Ovary (tissue), 10 donors: ENCODE measurements at regions of chr16 and their contacts with region 1.

Region 1: GRCh38 chr16:79482011-79482410 is 118.5 kb downstream of the MAF start:
- DNase-seq: no peak
- H3K4me3 ChIP-seq: no peak overlapping the region
- H3K27ac ChIP-seq: no peak overlapping the region
- H3K4me1 ChIP-seq: no peaks in the 10 kb centered on the region
- H3K27me3 ChIP-seq: no peaks in the 10 kb centered on the region
- CTCF ChIP-seq: no peak
- EP300 ChIP-seq: no peak
- POLR2A ChIP-seq: no peak

Region 2: DNA sequence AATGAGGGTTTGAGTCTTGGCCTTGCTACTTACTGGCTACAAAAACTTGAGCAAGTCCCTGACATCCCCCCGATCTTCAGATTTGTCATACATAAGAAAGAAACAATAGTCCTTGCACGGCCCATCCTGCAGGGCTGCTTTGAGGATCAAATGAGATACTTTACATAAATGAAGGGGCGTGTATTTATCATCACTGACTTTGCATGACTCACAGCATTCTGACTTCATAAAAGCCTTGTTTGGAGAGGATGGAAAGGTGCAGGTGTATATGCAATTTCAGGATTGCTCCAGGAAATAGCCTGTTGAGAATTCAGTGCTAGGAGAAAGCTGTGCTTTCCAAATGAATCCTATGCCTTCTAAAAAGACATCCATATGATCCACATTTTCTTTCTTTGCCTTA is 583.6 kb after region 1 on chr16:
- intact Hi-C with region 1: loop called in 1 of 4 experiments (anchors 5 kb)
- DNase-seq: no peak
- H3K4me3 ChIP-seq: no peak overlapping the region
- H3K27ac ChIP-seq: no peak overlapping the region
- H3K4me1 ChIP-seq: no peaks in the 10 kb centered on the region
- H3K27me3 ChIP-seq: no peaks in the 10 kb centered on the region
- CTCF ChIP-seq: no peak
- EP300 ChIP-seq: no peak
- POLR2A ChIP-seq: no peak